Sigmoid colon (tissue), 7 donors: ENCODE measurements at regions of chr4 and their contacts with region 1.

Region 1: GRCh38 chr4:26319467-26319948 is 1.3 kb upstream of the RBPJ start:
- DNase-seq: peak; percentile 99
- H3K4me3 ChIP-seq: peak overlapping the region; percentile 54 to 81 (median 68)
- H3K27ac ChIP-seq: peak overlapping the region; percentile 89 to 97 (median 95)
- H3K4me1 ChIP-seq: peaks cover 3 to 45% (median 26%) of the 10 kb centered on the region in 4 donors
- H3K27me3 ChIP-seq: no peaks in the 10 kb centered on the region
- CTCF ChIP-seq: no peak
- EP300 ChIP-seq: peak in 1 of 4 donors; percentile 69
- POLR2A ChIP-seq: no peak

Region 2: GRCh38 chr4:25986807-25987206 is 332.7 kb before region 1 on chr4:
- intact Hi-C with region 1: loop called (anchors 5 kb)
- DNase-seq: no peak
- H3K4me3 ChIP-seq: no peak overlapping the region
- H3K27ac ChIP-seq: no peak overlapping the region
- H3K4me1 ChIP-seq: peaks cover 0 to 9% (median 4%) of the 10 kb centered on the region in 4 donors
- H3K27me3 ChIP-seq: no peaks in the 10 kb centered on the region
- CTCF ChIP-seq: no peak
- EP300 ChIP-seq: no peak
- POLR2A ChIP-seq: no peak

Region 3: DNA sequence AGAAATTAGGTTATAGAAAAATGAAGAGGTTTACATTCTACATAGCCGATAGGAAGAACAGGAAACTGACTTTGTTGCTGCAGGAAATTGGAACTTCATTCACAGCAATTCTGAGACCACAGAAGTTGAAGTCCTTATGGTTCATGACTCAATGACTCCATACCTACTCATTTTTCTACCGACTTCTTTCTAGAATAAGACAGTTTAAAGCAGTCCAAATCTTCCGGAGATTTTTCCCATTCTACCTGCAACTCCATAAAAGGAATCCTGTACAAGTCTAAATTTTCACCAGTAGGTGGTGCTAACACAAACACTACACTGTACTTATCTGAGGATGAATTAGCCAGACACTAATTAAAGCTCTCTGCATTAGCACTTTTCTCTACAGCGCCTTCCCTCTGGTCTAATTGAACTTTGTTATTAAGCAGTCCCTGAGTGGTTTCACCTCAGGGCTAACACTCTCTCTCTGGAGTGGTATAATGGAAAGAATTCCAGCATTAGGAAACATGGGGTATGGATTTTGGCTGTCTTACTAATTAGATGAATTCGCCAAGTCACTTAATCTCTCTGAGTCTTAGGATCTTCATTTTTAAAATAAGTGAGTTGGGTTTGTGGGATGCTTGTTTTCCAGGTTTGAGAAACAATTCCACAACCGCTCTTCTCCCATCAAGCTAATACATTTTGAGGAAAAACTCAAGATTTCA is 237.6 kb before region 1 on chr4:
- intact Hi-C with region 1: loop called (anchors 2 kb)
- DNase-seq: no peak
- H3K4me3 ChIP-seq: no peak overlapping the region
- H3K27ac ChIP-seq: no peak overlapping the region
- H3K4me1 ChIP-seq: peaks cover 0 to 23% (median 7%) of the 10 kb centered on the region in 4 donors
- H3K27me3 ChIP-seq: no peaks in the 10 kb centered on the region
- CTCF ChIP-seq: peak; percentile 41 to 77 (median 70)
- EP300 ChIP-seq: no peak
- POLR2A ChIP-seq: no peak

Region 4: DNA sequence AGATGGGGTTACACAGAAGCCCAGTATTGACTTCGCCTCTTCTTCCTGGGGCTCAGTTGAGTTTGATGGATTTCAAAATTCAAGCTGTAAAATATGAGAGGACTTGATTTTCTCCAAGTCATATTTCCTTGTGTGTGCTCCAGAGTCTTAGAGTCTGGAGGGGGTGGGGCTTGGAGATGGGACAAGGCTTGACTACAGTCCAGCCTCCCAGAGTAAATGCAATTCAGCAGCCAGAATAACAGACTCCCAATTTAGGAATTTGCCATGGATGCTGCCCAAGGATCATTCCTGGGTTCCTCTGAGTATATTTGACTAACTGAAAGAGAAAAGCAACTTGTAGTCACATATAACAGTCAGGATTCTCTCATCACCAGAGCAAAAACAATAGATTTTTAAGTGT is 52.4 kb before region 1 on chr4:
- intact Hi-C with region 1: loop called (anchors 5 kb)
- DNase-seq: peak; percentile 87
- H3K4me3 ChIP-seq: no peak overlapping the region
- H3K27ac ChIP-seq: peak overlapping the region in 3 of 4 donors; percentile 50 to 58 (median 57)
- H3K4me1 ChIP-seq: peaks cover 0 to 31% (median 24%) of the 10 kb centered on the region in 4 donors
- H3K27me3 ChIP-seq: no peaks in the 10 kb centered on the region
- CTCF ChIP-seq: no peak
- EP300 ChIP-seq: no peak
- POLR2A ChIP-seq: no peak

Region 5: DNA sequence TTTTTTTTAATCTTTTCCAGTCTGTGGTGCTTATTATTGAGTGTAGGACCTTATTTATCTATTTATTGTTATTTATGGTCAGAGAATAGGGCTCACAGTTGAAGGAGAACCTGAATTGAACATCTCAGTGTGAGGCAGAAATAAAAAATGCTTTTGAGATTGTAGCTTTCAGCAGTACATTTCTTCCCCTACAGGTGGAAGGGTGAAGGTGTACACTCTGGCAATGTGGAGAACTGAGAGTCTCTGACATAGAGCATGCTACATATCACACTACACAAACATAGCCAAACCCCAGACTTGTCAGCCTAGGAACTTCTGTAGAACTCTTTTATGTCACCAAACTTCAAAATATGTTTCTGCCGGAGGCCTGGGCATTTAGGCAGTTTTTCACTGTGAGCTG is 681.3 kb after region 1 on chr4:
- intact Hi-C with region 1: loop called (anchors 10 kb)
- DNase-seq: no peak
- H3K4me3 ChIP-seq: no peak overlapping the region
- H3K27ac ChIP-seq: no peak overlapping the region
- H3K4me1 ChIP-seq: peaks cover 0 to 27% (median 12%) of the 10 kb centered on the region in 4 donors
- H3K27me3 ChIP-seq: no peaks in the 10 kb centered on the region
- CTCF ChIP-seq: no peak
- EP300 ChIP-seq: no peak
- POLR2A ChIP-seq: no peak